ENCODE measurements at regions of chr4 and their contacts with region 1.

Region 1: DNA sequence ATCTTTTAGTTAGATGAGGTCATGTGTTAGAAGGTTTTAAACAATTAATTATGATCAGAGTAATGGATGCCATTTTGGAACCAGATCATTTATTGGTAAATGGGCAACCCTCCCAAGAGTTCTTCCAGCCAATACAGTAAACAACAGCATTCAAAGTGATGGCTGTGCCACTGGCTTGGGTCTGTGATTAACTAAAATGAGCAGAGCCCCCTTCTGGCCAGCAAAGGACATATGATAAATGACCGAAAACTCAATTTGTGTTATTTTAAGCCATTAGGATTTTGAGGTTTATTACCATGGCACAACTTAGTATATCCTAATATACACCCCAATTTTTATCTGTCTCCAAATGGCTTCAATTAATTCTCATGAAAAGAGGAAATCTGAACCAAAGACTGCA is 90.8 kb upstream of the NPFFR2 start:
- DNase-seq: no peak
- ATAC-seq: no peak
- H3K4me3 ChIP-seq: no peak overlapping the region
- H3K27ac ChIP-seq: no peak overlapping the region
- H3K4me1 ChIP-seq: no peaks in the 10 kb centered on the region
- H3K27me3 ChIP-seq: no peaks in the 10 kb centered on the region
- CTCF ChIP-seq: peak in 6 of 12 donors; percentile 7 to 36 (median 14)
- POLR2A ChIP-seq: no peak

Region 2: DNA sequence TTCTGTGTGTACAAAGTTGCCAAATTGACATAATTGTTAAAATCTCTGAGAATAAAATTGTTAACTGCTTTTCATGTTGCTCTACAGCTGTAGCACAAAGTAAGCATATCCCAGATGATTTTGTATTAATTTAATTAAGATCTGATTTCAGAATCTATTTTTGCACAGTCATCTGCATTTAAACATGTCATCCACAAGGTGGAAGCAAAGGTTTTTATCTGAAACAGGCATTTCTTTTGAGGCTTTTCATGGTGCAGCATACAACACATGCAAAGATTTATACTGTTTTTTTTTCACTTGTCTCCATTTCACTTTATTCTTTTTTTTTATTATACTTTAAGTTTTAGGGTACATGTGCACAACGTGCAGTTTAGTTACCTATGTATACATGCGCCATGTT is 208.3 kb before region 1 on chr4:
- intact Hi-C with region 1: loop called in 1 of 10 experiments (anchors 10 kb)
- DNase-seq: no peak
- ATAC-seq: no peak
- H3K4me3 ChIP-seq: no peak overlapping the region
- H3K27ac ChIP-seq: no peak overlapping the region
- H3K4me1 ChIP-seq: no peaks in the 10 kb centered on the region
- H3K27me3 ChIP-seq: no peaks in the 10 kb centered on the region
- CTCF ChIP-seq: peak in 10 of 12 donors; percentile 6 to 37 (median 24)
- POLR2A ChIP-seq: no peak

Region 3: DNA sequence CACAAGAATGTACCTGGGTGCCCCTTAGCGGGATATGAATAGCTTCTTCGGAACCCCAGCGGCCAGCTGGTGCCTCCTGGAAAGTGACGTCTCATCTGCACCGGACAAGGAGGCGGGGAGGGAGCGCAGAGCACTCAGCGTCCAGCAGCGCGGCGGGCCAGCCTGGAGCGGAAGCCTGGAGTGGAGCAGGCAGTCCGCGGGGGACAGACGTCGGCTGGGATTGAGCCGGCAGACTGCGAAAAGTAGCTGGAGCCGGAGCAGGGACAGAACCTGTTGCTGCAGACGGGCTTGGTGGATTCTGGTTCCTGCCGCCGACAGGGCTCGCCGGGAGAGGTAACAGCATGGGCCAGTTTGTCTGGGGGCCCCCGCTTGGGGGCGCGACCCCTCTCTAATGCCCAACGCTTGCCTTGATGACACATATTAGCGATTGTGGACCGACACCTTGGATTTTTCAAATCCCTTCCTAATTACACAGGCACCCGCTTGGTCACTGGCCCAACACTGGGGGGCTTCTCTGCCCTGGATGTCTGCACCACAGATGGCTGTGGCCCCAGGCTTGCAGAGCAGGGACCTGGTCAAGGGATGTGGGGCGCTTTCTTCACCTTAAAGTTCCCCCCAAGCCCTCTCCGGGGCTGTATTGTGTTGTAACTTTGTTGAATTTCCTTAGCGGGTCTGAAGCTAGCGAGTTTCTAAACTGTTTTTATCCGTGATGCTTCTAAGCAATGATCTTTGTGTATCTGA is 91.0 kb after region 1 on chr4 and contains the start of gene NPFFR2:
- intact Hi-C with region 1: no loop called
- DNase-seq: peak in 4 of 5 donors; percentile 16 to 58 (median 23)
- ATAC-seq: peak in 2 of 4 donors; percentile 53 to 59
- H3K4me3 ChIP-seq: peak within 1 kb of the TSS in 8 of 12 donors; percentile 9 to 36 (median 26)
- H3K27ac ChIP-seq: no peak within 1 kb of the TSS
- H3K4me1 ChIP-seq: no peaks in the 10 kb centered on the region
- H3K27me3 ChIP-seq: peaks cover 0 to 38% (median 9%) of the 10 kb centered on the region in 9 donors
- CTCF ChIP-seq: no peak
- POLR2A ChIP-seq: no peak
- total RNA-seq, gene NPFFR2: 0.97 TPM in 1 of 9 donors, not detected in the others

Measured in heart left ventricle (tissue), 16 donors.